ENCODE measurements at regions of chr4 and their contacts with region 1.

Region 1: DNA sequence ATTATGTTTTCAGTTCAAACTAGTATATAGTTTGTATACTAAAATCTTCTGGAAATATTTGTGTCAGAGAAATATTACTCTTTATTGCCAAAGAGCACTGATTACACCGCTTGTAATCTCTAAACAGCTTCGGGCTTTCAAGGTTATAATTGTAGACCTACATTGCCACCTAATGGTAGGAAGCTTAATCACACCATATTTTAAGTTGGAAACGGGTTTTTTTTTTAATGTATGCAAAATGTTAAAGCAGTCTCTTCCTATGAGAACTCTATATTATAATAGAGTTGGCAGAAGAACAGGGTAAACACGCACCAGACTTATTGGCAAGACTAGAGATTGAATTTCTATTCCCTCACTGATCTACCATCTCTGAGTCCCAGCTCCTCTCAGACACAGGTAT is 19.5 kb upstream of the NFXL1 start:
- DNase-seq: peak; percentile 12
- H3K4me3 ChIP-seq: no peak overlapping the region
- H3K27ac ChIP-seq: no peak overlapping the region
- H3K4me1 ChIP-seq: peaks cover 8% of the 10 kb centered on the region
- H3K27me3 ChIP-seq: no peaks in the 10 kb centered on the region
- CTCF ChIP-seq: peak; percentile 45 to 58

Region 2: DNA sequence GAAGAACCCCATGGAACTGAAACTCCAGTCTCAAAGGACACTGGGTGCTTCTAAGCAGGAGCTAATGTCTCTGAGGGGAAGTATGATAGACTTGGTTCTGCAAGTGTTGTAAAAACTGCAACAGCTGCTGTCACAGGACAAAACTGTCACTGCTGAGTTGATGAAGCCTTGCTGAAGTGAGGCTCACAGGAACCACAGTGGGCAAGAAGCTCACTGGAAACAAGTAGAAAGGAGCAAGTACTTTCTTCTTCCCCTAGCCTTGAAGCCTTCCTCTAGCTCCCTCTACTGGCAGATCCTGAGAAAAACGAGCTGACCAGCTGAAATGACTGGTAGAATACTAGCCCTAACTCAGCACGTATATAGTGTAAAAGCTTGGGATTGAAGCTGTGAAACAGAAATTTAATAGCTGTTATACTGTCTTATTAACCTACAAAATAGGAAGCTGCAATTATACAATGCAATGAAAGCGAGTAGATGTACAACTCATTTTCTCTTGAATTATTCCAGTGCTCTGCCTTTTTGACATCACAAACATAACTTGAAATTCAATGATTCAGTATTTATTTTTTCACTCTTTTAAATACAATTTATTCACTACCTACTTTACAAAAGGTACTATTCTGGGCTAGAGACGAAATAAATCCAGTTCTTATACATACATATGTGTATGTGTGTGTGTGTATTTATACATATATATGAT is 811.1 kb before region 1 on chr4:
- CTCF ChIA-PET with region 1: no interaction called
- dilution Hi-C with region 1: no loop called
- in situ Hi-C with region 1: no loop called
- intact Hi-C with region 1: loop called (anchors 10 kb)
- DNase-seq: peak; percentile 58
- H3K4me3 ChIP-seq: no peak overlapping the region
- H3K27ac ChIP-seq: no peak overlapping the region
- H3K4me1 ChIP-seq: no peaks in the 10 kb centered on the region
- H3K27me3 ChIP-seq: peaks cover 3% of the 10 kb centered on the region
- CTCF ChIP-seq: peak; percentile 92 to 94

Region 3: GRCh38 chr4:47668810-47669408 is 264.9 kb before region 1 on chr4:
- CTCF ChIA-PET with region 1: interaction called, 4 read pairs
- dilution Hi-C with region 1: no loop called
- in situ Hi-C with region 1: no loop called
- intact Hi-C with region 1: loop called (anchors 1 kb)
- DNase-seq: peak; percentile 38
- H3K4me3 ChIP-seq: no peak overlapping the region
- H3K27ac ChIP-seq: no peak overlapping the region
- H3K4me1 ChIP-seq: no peaks in the 10 kb centered on the region
- H3K27me3 ChIP-seq: peaks cover under 1% of the 10 kb centered on the region
- CTCF ChIP-seq: peak; percentile 69 to 74

Region 4: DNA sequence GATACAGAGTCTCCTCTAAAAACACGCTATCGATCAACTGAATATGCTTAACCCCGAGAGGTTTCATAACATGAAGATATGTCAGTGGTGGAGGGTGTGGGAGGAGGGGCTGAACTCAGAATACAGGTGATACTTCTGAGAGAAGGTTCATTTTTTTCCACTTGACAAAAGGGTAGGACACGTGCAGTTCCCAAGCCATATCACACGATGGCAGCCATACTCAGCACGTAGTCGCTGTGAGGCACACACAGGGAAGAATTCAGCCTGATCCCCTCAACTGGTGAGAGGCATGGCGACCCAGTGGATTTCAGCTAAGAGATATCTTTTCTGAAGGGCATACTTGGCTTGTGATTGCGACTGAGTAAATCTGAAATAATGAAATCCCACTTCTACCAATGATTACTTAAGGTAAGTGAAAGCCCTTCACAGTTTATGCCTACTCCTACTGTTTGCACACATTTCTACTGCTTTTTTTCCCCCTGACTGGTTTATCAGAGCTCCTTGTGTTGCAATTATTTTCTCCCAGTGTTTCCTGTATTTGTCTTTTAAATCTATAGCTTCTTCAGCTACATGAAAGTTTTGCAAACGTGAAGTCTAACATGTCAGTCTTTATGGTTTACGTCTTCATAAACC is 229.0 kb before region 1 on chr4:
- CTCF ChIA-PET with region 1: interaction called, 7 read pairs
- dilution Hi-C with region 1: no loop called
- in situ Hi-C with region 1: no loop called
- intact Hi-C with region 1: loop called (anchors 1 kb)
- DNase-seq: no peak
- H3K4me3 ChIP-seq: no peak overlapping the region
- H3K27ac ChIP-seq: no peak overlapping the region
- H3K4me1 ChIP-seq: no peaks in the 10 kb centered on the region
- H3K27me3 ChIP-seq: peaks cover 2% of the 10 kb centered on the region
- CTCF ChIP-seq: peak in 1 of 2 donors; percentile 28

Region 5: GRCh38 chr4:47814618-47815295 is 119.1 kb before region 1 on chr4:
- CTCF ChIA-PET with region 1: no interaction called
- dilution Hi-C with region 1: no loop called
- in situ Hi-C with region 1: no loop called
- intact Hi-C with region 1: no loop called
- DNase-seq: no peak
- H3K4me3 ChIP-seq: no peak overlapping the region
- H3K27ac ChIP-seq: no peak overlapping the region
- H3K4me1 ChIP-seq: no peaks in the 10 kb centered on the region
- H3K27me3 ChIP-seq: peaks cover 3% of the 10 kb centered on the region
- CTCF ChIP-seq: no peak